Activated T-helper 1 cell treated with anti-CD3 and anti-CD28 coated beads, Interleukin-12 subunit alpha, Interleukin-12 subunit beta, Interleukin-2, Interleukin-4 antibody, amounts not matched to agents 30 ng/mL and 10 ng/mL and 1 ng/mL, durations not matched to agents 14 hours and 24 hours and 36 hours (primary cell): ENCODE measurements at regions of chr15 and their contacts with region 1.

Region 1: GRCh38 chr15:63805993-63806980 is 27.5 kb downstream of the HERC1 start:
- DNase-seq: no peak
- H3K4me3 Mint-ChIP-seq: no peak overlapping the region
- H3K27ac Mint-ChIP-seq: peak overlapping the region; percentile 19
- H3K4me1 Mint-ChIP-seq: peaks cover 52% of the 10 kb centered on the region
- H3K27me3 Mint-ChIP-seq: no peaks in the 10 kb centered on the region

Region 2: DNA sequence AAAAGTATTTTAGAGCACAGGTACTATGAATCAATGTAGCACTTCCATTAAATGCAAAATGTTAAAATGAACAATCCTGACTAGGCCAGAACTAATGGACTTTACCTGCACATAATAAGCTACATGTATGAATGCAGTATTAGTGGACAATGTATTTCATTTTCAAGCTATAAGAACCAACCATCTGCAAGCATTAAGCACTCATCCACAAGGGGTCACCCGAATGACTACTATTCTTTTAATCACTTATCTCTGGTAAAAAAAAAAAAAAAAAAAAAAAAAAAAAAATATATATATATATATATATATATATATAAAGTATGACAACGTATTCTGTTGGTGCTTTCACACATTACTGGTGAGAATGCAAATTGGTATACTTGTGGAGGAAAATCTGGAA is 20.2 kb after region 1 on chr15:
- intact Hi-C with region 1: loop called (anchors 2 kb)
- DNase-seq: no peak
- H3K4me3 Mint-ChIP-seq: peak overlapping the region; percentile 51
- H3K27ac Mint-ChIP-seq: no peak overlapping the region
- H3K4me1 Mint-ChIP-seq: peaks cover 63% of the 10 kb centered on the region
- H3K27me3 Mint-ChIP-seq: no peaks in the 10 kb centered on the region